Activated CD8-positive, alpha-beta T cell treated with anti-CD3 and anti-CD28 coated beads, Interleukin-2, amount 10 ng/mL, durations not matched to agents 7 days and 5 days (primary cell): ENCODE measurements at regions of chr13 and their contacts with region 1.

Region 1: DNA sequence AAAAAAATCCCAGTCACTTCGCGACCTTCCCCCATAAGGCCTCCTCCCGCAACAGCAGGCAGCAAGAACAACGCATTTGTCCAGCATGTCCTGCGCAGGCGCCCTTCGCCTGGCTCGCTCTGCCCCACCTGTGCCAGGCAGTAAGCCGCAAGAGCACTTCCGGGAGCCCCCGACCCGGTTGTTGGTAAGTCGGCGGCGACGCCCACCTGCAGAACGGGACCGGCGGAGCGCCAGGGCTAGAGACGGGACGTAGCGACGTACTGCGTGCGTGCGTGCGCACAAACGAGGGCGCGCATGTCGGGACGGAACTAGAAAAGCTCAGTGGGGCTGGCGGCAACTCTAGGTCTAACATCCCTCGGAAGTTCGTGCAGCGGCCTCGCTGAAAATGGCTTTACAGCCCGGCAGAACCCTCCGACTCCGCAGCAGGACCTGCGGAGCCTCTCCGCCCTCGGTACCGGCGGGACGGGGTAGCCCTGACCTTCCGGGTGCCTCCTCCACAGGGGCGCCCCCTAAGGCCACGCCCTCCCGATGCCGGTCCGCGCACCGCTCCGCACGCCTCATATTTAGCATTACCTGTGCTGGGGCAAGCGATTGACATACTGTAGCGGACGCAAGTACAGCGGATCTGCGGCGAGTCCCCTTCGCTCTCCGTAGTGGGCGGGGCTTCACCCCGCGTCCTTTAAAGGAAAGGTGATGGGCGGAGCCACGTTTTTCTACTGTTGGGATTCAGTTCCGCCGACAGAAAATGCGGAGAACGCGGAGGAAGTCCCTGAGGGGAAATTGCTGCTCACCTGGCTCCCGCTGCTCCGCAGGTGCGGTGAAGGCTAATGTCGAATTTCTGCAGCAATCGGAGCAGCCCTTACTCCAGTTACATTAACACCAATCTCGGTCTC is at the start of gene MTIF3:
- DNase-seq: peak; percentile 98
- ATAC-seq: peak; percentile 93
- H3K4me3 Mint-ChIP-seq: peak within 1 kb of the TSS; percentile 91
- H3K27ac Mint-ChIP-seq: peak within 1 kb of the TSS; percentile 93
- H3K4me1 Mint-ChIP-seq: peaks cover 55% of the 10 kb centered on the region
- H3K27me3 Mint-ChIP-seq: no peaks in the 10 kb centered on the region
- total RNA-seq, gene MTIF3: 39.9 to 44.7 TPM

Region 2: GRCh38 chr13:27079421-27079958 is 370.7 kb before region 1 on chr13:
- CTCF ChIA-PET with region 1: no interaction called
- POLR2A ChIA-PET with region 1: no interaction called
- DNase-seq: no peak
- ATAC-seq: no peak
- H3K4me3 Mint-ChIP-seq: no peak overlapping the region
- H3K27ac Mint-ChIP-seq: peak overlapping the region; percentile 31
- H3K4me1 Mint-ChIP-seq: peaks cover 21% of the 10 kb centered on the region
- H3K27me3 Mint-ChIP-seq: no peaks in the 10 kb centered on the region

Region 3: DNA sequence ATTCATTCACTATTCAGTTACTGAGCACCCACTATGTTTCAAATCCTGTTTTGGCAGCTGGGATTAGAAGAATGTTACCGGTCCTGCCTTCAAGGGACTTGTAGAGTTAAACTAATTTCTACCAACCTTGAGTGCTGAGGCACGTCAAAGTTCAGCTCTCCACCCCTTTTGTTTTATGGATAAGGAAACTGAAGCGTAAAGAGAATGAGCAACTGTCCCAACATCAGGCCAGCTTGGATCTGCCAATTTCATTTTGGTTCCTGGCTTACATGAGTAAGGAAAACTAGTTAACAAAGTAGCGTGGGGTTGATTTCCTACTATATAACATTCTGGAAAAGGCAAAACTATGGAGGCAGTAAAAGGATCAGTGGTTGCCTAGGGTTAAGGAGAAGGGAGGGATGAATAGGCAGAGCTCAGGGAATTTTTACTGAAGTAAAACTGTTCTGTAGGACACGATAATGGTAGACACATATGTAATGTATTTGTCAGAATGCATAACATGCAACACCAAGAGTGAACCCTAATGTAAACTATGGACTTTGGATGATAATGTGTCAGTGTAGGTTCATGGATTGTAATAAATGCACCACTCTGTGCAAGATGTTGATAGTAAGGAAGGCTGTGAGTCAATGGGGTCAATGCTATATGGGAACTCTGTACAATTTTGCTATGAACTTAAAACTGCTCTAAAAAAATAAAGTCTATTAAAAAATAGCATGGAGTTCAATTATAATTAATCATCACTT is 20.1 kb after region 1 on chr13:
- CTCF ChIA-PET with region 1: no interaction called
- POLR2A ChIA-PET with region 1: no interaction called
- DNase-seq: no peak
- ATAC-seq: no peak
- H3K4me3 Mint-ChIP-seq: no peak overlapping the region
- H3K27ac Mint-ChIP-seq: no peak overlapping the region
- H3K4me1 Mint-ChIP-seq: peaks cover 20% of the 10 kb centered on the region
- H3K27me3 Mint-ChIP-seq: peaks cover 7% of the 10 kb centered on the region

Region 4: DNA sequence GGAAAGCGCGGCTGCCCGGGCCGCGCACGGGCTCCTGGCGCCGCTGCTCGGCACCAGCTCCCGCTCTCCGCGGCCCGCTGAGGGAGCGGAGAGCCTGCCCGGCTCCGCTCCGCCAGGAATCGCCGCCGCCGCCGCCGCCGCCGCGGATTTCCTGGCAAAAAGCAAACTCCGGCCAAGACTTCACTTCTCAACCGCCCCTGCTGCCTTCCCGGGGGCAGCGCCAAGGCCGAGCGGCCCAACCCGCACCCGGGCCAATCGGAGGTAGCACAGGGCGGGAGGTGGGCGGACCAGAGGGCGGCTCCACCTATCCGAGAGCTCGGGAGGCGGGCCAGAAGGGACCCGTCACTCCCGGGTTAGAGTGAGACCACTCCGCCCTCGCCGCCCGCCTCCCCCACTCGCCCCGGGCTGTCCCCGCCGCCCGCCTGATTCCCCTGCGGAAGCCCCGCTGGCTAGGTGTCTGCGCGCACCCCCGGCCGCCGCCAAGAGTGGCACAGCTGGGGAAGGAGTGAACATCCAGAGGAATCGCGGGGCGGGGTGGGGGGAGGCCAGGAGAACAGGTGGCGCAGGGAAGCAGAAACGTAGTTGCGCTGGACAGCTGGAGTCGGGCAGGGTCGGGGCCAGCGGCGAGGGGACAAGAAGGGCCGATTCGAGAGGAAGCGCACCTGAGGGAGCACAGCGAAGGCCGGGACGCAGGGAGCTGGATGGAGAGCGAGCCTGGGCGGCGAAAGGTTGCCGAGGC is 170.4 kb after region 1 on chr13 and contains the start of gene LNX2:
- CTCF ChIA-PET with region 1: interaction called, 9 read pairs
- POLR2A ChIA-PET with region 1: interaction called, 14 read pairs
- DNase-seq: peak; percentile 97
- ATAC-seq: peak; percentile 92
- H3K4me3 Mint-ChIP-seq: peak within 1 kb of the TSS; percentile 92
- H3K27ac Mint-ChIP-seq: peak within 1 kb of the TSS; percentile 91
- H3K4me1 Mint-ChIP-seq: peaks cover 50% of the 10 kb centered on the region
- H3K27me3 Mint-ChIP-seq: no peaks in the 10 kb centered on the region
- total RNA-seq, gene LNX2: 7.1 to 7.6 TPM